ENCODE measurements at regions of chr9 and their contacts with region 1.

Region 1: GRCh38 chr9:100028201-100028784 is 70.5 kb downstream of the ERP44 start:
- DNase-seq: peak; percentile 72
- ATAC-seq: peak; percentile 95
- H3K4me3 ChIP-seq: no peak overlapping the region
- H3K27ac ChIP-seq: no peak overlapping the region
- H3K4me1 ChIP-seq: no peaks in the 10 kb centered on the region
- H3K27me3 ChIP-seq: no peaks in the 10 kb centered on the region
- CTCF ChIP-seq: peak; percentile 88

Region 2: DNA sequence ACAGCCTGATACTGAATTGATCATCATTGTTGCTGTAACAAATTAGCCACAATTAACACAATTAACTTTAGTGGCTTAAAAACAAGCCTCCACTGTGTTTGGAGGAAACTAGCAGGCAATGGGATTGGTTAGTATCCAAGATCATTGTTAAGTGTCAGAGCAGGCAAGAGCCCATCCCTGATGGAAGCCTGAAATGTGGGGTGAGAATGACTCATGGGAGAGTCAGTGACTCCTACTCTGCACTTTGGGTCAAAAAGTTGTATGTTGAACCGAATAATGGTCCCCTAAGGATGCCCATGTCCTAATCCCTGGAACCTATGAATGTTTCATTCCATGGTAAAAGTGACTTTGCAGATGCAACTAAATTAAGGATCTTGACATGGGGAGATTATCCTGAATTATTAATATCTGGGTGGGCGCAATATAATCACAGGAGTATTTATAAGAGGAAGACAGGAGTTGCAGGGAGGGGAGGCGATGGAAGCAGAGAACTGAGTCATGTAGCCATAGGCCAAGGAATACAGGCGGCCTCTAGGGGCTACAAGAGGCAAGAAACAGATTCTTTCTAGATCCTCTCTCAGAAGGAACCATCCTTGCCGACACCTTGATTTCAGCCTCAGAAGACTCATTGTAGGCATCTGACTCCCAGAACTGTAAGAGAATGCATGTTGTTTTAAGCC is 835.4 kb before region 1 on chr9:
- CTCF ChIA-PET with region 1: no interaction called
- POLR2A ChIA-PET with region 1: no interaction called
- in situ Hi-C with region 1: no loop called
- intact Hi-C with region 1: no loop called
- DNase-seq: no peak
- ATAC-seq: no peak
- H3K4me3 ChIP-seq: no peak overlapping the region
- H3K27ac ChIP-seq: no peak overlapping the region
- H3K4me1 ChIP-seq: no peaks in the 10 kb centered on the region; the same call in 1 of the 2 replicates
- H3K27me3 ChIP-seq: peaks cover 2% of the 10 kb centered on the region; the same call in 1 of the 2 replicates
- CTCF ChIP-seq: peak; percentile 20

Region 3: GRCh38 chr9:99998266-99998665 is 30.0 kb before region 1 on chr9:
- CTCF ChIA-PET with region 1: no interaction called
- POLR2A ChIA-PET with region 1: no interaction called
- in situ Hi-C with region 1: no loop called
- intact Hi-C with region 1: no loop called
- DNase-seq: no peak
- ATAC-seq: no peak
- H3K4me3 ChIP-seq: no peak overlapping the region
- H3K27ac ChIP-seq: no peak overlapping the region
- H3K4me1 ChIP-seq: no peaks in the 10 kb centered on the region
- H3K27me3 ChIP-seq: no peaks in the 10 kb centered on the region
- CTCF ChIP-seq: no peak

Region 4: GRCh38 chr9:100222674-100223073 is 194.4 kb after region 1 on chr9:
- CTCF ChIA-PET with region 1: no interaction called
- POLR2A ChIA-PET with region 1: no interaction called
- in situ Hi-C with region 1: no loop called
- intact Hi-C with region 1: loop called (anchors 2 kb)
- DNase-seq: no peak
- ATAC-seq: no peak
- H3K4me3 ChIP-seq: no peak overlapping the region
- H3K27ac ChIP-seq: no peak overlapping the region
- H3K4me1 ChIP-seq: no peaks in the 10 kb centered on the region
- H3K27me3 ChIP-seq: no peaks in the 10 kb centered on the region
- CTCF ChIP-seq: peak; percentile 41; the same call in 1 of the 2 replicates

Region 5: GRCh38 chr9:100277166-100277979 is 249.1 kb after region 1 on chr9:
- CTCF ChIA-PET with region 1: no interaction called
- POLR2A ChIA-PET with region 1: no interaction called
- in situ Hi-C with region 1: no loop called
- intact Hi-C with region 1: no loop called
- DNase-seq: no peak
- ATAC-seq: no peak
- H3K4me3 ChIP-seq: no peak overlapping the region
- H3K27ac ChIP-seq: no peak overlapping the region
- H3K4me1 ChIP-seq: no peaks in the 10 kb centered on the region
- H3K27me3 ChIP-seq: no peaks in the 10 kb centered on the region
- CTCF ChIP-seq: no peak

Region 6: GRCh38 chr9:100322954-100323536 is 294.8 kb after region 1 on chr9:
- CTCF ChIA-PET with region 1: no interaction called
- POLR2A ChIA-PET with region 1: interaction called, 3 read pairs
- in situ Hi-C with region 1: no loop called
- intact Hi-C with region 1: loop called (anchors 5 kb)
- DNase-seq: no peak
- ATAC-seq: no peak
- H3K4me3 ChIP-seq: no peak overlapping the region
- H3K27ac ChIP-seq: no peak overlapping the region
- H3K4me1 ChIP-seq: no peaks in the 10 kb centered on the region
- H3K27me3 ChIP-seq: no peaks in the 10 kb centered on the region
- CTCF ChIP-seq: peak; percentile 64

Region 7: DNA sequence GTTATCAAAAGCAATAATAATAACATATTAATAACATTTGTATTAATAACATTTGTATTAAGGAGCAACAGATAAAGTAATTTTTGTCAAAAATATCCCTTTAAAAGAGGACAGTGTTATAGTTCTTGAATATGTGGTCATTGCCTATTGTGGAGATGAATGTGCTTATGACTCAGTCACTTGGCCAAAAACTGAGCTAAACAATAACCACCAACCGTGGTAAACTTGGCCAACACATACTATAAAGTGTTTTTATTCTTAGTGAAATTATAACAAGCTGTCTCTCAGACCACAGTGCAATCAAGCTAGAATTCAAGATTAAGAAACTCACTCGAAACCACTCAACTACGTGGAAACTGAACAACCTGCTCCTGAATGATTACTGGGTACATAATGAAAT is 841.0 kb after region 1 on chr9:
- CTCF ChIA-PET with region 1: no interaction called
- POLR2A ChIA-PET with region 1: no interaction called
- in situ Hi-C with region 1: no loop called
- intact Hi-C with region 1: no loop called
- DNase-seq: no peak
- ATAC-seq: no peak
- H3K4me3 ChIP-seq: no peak overlapping the region
- H3K27ac ChIP-seq: no peak overlapping the region
- H3K4me1 ChIP-seq: no peaks in the 10 kb centered on the region
- H3K27me3 ChIP-seq: no peaks in the 10 kb centered on the region
- CTCF ChIP-seq: no peak